Right ventricle myocardium inferior (tissue), 1 donor: ENCODE measurements at regions of chr7 and their contacts with region 1.

Region 1: DNA sequence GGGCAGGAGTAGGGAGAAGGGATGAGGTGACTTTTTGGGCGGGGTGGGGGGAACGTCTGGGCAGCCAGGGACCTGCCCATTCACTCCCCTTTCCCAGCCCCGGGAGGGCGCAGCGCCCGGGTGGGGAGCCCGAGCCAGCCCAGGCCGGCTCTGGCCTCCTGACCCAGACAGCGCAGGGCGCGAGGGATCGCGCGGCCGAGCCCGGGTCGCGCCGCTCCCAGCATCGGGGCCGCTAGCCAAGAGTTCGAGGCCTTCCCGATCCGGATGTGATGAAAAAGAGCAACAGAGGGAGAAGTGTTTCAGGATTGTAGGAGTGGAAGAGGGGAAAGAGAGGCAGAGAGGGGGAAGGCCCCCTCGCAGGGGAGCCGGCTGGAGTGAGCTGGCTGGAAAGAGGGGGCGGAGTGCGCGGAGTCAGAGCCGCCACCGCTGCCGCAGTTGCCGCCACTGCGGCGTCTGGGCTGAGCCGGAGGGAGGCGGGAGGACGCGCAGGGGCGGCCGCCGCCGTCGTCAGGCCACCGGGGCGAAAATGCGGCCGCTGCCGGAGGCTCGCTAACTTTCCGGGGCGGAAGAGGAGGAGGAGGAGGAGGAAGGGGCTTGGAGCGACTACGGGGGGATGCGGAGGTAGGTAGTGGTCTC is at the start of gene MDFIC:
- DNase-seq: peak; percentile 79
- ATAC-seq: peak; percentile 90
- total RNA-seq, gene MDFIC: 18.3 TPM

Region 2: GRCh38 chr7:114988755-114989375 is 66.7 kb after region 1 on chr7:
- intact Hi-C with region 1: loop called (anchors 10 kb)
- DNase-seq: peak; percentile 56
- ATAC-seq: peak; percentile 71

Region 3: GRCh38 chr7:115008465-115009114 is 86.5 kb after region 1 on chr7:
- intact Hi-C with region 1: loop called (anchors 1 kb)
- DNase-seq: peak; percentile 87
- ATAC-seq: peak; percentile 97

Region 4: GRCh38 chr7:115087437-115087836 is 165.3 kb after region 1 on chr7:
- intact Hi-C with region 1: loop called (anchors 2 kb)
- DNase-seq: no peak
- ATAC-seq: peak; percentile 76

Region 5: GRCh38 chr7:115217373-115217772 is 295.2 kb after region 1 on chr7:
- intact Hi-C with region 1: loop called (anchors 5 kb)
- DNase-seq: no peak
- ATAC-seq: no peak